ENCODE measurements at regions of chr9 and their contacts with region 1.

Region 1: DNA sequence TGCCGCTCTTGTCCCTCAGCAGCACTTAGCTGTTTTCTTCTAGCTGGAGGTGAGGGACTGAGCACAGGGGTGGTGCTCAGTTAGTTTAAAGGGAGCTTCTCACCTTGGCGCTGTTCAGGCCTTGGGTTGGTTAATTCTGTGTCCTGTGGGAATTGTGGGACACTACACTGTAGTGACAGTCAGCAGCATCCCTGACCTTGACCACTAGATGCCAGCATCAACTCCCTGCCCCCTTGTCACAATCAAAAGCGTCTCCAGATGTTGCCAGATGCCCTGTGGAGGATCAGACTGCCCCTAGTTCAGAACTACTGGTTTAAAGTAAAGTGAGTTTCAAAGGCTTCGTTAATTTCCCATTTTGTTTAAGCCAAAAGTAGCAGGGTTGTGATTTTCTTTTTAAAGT is 65.5 kb upstream of the DMRT3 start:
- DNase-seq: no peak
- H3K4me3 ChIP-seq: no peak overlapping the region
- H3K27ac ChIP-seq: no peak overlapping the region
- H3K4me1 ChIP-seq: no peaks in the 10 kb centered on the region
- H3K27me3 ChIP-seq: peaks cover 2 to 5% of the 10 kb centered on the region in 2 experiments
- CTCF ChIP-seq: no peak
- POLR2A ChIP-seq: no peak

Region 2: GRCh38 chr9:841371-842209 is 69.4 kb before region 1 on chr9 and contains the start of gene DMRT1:
- CTCF ChIA-PET with region 1: no interaction called
- POLR2A ChIA-PET with region 1: interaction called, 11 read pairs
- dilution Hi-C with region 1: no loop called
- intact Hi-C with region 1: no loop called
- DNase-seq: no peak
- H3K4me3 ChIP-seq: no peak within 1 kb of the TSS
- H3K27ac ChIP-seq: no peak within 1 kb of the TSS
- H3K4me1 ChIP-seq: no peaks in the 10 kb centered on the region
- H3K27me3 ChIP-seq: peaks cover 37 to 51% of the 10 kb centered on the region in 2 experiments
- CTCF ChIP-seq: no peak
- POLR2A ChIP-seq: no peak
- total RNA-seq, gene DMRT1: 0.20 TPM in 1 of 2 replicates, not detected in the other